Transverse colon (tissue), 4 donors: ENCODE measurements at regions of chr6 and their contacts with region 1.

Region 1: GRCh38 chr6:32589598-32590449 is at the start of gene HLA-DRB1:
- DNase-seq: peak; percentile 25
- H3K4me3 ChIP-seq: no peak within 1 kb of the TSS
- H3K27ac ChIP-seq: no peak within 1 kb of the TSS
- H3K4me1 ChIP-seq: no peaks in the 10 kb centered on the region
- H3K27me3 ChIP-seq: no peaks in the 10 kb centered on the region
- CTCF ChIP-seq: no peak
- EP300 ChIP-seq: no peak
- POLR2A ChIP-seq: no peak
- total RNA-seq, gene HLA-DRB1: 7.9 to 23.8 (median 12.6) TPM

Region 2: DNA sequence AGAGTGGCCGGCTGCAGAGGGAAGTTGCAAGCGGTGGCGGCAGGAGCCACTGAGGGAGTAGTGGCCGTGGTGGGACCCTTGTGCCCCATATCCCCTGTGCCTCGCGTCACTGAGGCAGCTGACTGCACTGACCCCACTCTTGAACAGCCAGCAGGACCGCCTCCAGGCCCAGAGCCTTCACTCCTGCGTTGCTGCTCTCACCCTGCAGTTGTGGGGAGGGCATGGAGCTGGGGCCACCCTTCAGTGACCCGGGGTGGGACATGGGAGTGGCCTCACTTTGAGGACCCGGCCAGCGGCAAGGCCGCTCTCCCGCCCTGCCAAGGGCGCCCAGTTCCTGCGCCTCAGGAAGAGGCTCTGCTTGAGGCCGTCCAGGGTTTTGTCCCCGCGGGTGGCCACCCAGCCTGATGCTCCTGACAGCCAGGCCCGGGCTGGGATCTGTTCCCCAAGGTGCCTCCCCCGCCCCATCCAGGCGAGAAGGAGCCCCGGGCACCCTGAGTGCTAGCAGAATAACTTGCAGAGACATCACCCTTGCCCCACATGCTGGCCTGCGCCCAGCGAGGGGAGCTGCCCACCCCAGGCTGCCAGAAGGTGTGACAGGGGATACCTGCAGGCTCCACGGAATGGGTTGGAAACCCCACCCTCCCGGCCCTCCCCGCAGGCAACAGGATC is 105.7 kb before region 1 on chr6:
- in situ Hi-C with region 1: loop called in 1 of 4 experiments (anchors 25 kb)
- intact Hi-C with region 1: no loop called
- DNase-seq: no peak
- H3K4me3 ChIP-seq: no peak overlapping the region
- H3K27ac ChIP-seq: no peak overlapping the region
- H3K4me1 ChIP-seq: no peaks in the 10 kb centered on the region
- H3K27me3 ChIP-seq: no peaks in the 10 kb centered on the region
- CTCF ChIP-seq: no peak
- EP300 ChIP-seq: no peak
- POLR2A ChIP-seq: no peak

Region 3: GRCh38 chr6:32519118-32519909 is 70.5 kb before region 1 on chr6:
- in situ Hi-C with region 1: no loop called
- intact Hi-C with region 1: loop called (anchors 2 kb)
- DNase-seq: no peak
- H3K4me3 ChIP-seq: no peak overlapping the region
- H3K27ac ChIP-seq: no peak overlapping the region
- H3K4me1 ChIP-seq: no peaks in the 10 kb centered on the region
- H3K27me3 ChIP-seq: no peaks in the 10 kb centered on the region
- CTCF ChIP-seq: no peak
- EP300 ChIP-seq: no peak
- POLR2A ChIP-seq: no peak

Region 4: GRCh38 chr6:32529697-32530429 is 60.0 kb before region 1 on chr6 and contains the start of gene HLA-DRB5:
- in situ Hi-C with region 1: loop called in 3 of 4 experiments (anchors 5 kb)
- intact Hi-C with region 1: no loop called
- DNase-seq: peak; percentile 15
- H3K4me3 ChIP-seq: no peak within 1 kb of the TSS
- H3K27ac ChIP-seq: no peak within 1 kb of the TSS
- H3K4me1 ChIP-seq: no peaks in the 10 kb centered on the region
- H3K27me3 ChIP-seq: no peaks in the 10 kb centered on the region
- CTCF ChIP-seq: no peak
- EP300 ChIP-seq: no peak
- POLR2A ChIP-seq: no peak
- total RNA-seq, gene HLA-DRB5: 1.5 to 7.8 (median 5.2) TPM in 3 of 4 donors, not detected in the other